A549 (cell line): ENCODE measurements at regions of chr10 and their contacts with region 1.

Region 1: DNA sequence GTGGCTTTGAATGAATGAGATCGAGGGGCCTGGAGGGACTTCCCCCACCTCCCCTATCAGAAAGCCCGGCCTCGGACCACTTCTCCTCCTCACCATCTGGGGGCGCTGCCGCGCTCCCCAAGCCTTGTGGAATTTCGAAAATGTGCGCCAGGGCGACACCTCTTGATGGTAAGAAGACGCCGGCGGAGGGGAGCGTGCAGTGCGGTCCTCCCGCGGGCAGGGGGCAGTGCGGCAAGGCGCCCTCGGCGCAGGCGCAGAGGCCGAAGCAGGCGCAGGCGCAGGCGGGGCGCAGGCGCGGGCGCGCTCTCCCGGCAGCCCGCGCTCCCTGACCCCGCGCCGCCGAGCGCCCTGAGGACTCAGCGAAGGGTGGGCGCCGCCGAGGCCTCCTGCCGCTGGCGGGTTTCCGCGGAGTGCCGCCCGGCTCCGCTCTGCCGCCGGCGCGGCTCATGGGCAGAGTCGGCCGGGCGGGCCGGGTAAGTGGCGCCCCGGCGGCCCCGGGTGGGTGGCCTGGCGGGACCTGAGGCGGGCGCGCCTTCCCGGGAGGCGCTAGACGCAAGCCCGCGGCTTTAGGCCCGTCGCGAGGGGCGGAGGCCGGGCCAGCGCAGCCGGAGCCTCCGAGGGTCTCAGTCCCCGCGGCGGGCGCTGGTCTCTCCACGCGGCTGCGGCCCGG is at the start of gene RBM17:
- DNase-seq: peak; percentile 72 to 97
- ATAC-seq: peak; percentile 85 to 88
- H3K4me3 ChIP-seq: peak within 1 kb of the TSS; percentile 94
- H3K27ac ChIP-seq: peak within 1 kb of the TSS; percentile 95 to 97
- H3K4me1 ChIP-seq: peaks cover 35% of the 10 kb centered on the region
- CTCF ChIP-seq: peak; percentile 100
- EP300 ChIP-seq: no peak; a peak in 1 of 5 replicates
- POLR2A ChIP-seq: peak; percentile 59
- RAD21 ChIP-seq: peak; percentile 64 to 74
- polyA plus RNA-seq, gene RBM17: 68.0 and 75.2 TPM in 2 replicates

Region 2: DNA sequence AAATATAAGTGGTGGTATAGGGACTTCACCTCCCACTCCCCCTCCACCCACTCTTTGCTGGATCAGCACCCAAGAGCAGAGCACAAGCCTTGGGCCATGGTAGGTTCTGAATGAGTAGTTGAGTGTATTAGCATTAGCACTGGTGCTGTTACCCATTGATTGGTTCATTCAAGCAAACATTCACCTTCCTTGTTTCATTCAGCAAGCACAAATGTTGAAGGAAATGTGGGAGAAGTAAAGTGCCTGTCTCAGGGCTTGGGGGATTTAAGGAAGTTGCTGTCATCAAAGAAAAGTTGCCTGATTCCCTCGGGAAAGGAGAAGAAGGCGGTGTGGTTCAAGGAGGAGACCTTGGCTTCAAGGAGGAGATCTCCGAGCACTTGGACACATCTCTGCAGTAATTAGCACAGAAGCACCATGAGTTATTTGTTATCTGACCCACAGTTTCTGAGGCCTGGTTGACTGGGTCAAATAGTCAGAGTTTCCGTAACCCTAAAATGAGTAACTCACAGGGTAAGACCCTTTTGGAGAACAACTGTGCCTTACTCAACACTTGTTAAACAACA is 44.0 kb before region 1 on chr10:
- CTCF ChIA-PET with region 1: no interaction called
- POLR2A ChIA-PET with region 1: no interaction called
- DNase-seq: no peak
- ATAC-seq: no peak
- H3K4me3 ChIP-seq: no peak overlapping the region
- H3K27ac ChIP-seq: no peak overlapping the region
- H3K4me1 ChIP-seq: no peaks in the 10 kb centered on the region
- CTCF ChIP-seq: no peak
- EP300 ChIP-seq: no peak
- POLR2A ChIP-seq: no peak
- RAD21 ChIP-seq: no peak

Region 3: GRCh38 chr10:6068422-6068821 is 20.4 kb before region 1 on chr10:
- CTCF ChIA-PET with region 1: interaction called, 23 read pairs
- POLR2A ChIA-PET with region 1: no interaction called
- DNase-seq: no peak
- ATAC-seq: no peak
- H3K4me3 ChIP-seq: no peak overlapping the region
- H3K27ac ChIP-seq: no peak overlapping the region
- H3K4me1 ChIP-seq: no peaks in the 10 kb centered on the region
- CTCF ChIP-seq: no peak
- EP300 ChIP-seq: no peak
- POLR2A ChIP-seq: no peak
- RAD21 ChIP-seq: no peak